OCI-LY7 (cell line): ENCODE measurements at regions of chr4 and their contacts with region 1.

Region 1: DNA sequence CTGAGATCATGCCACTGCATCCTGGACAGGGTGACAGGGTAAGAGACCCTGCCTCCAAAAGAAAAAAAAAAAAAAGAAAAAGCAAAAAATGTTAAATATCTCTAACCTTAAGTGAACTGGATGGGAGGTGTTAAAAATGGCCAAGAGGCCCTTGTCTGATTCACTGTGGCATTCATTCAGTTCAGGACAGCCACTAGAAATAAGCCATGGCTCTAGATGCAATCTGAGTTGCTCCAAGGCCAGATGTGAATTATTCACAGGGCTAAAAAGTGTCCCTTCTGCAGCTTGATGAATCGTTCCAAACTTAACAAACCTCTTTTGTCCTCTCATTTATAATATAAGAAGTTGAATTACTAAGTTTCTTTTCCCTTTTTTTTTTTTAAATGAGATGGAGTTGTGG is 63.7 kb upstream of the FBXW7 start:
- DNase-seq: no peak
- H3K4me3 ChIP-seq: no peak overlapping the region
- H3K27ac ChIP-seq: no peak overlapping the region
- H3K4me1 ChIP-seq: peaks cover 19% of the 10 kb centered on the region
- CTCF ChIP-seq: no peak

Region 2: GRCh38 chr4:152106113-152106763 is 493.4 kb before region 1 on chr4:
- CTCF ChIA-PET with region 1: no interaction called
- POLR2A ChIA-PET with region 1: no interaction called
- intact Hi-C with region 1: no loop called
- DNase-seq: no peak
- H3K4me3 ChIP-seq: no peak overlapping the region
- H3K27ac ChIP-seq: no peak overlapping the region
- H3K4me1 ChIP-seq: peaks cover under 1% of the 10 kb centered on the region
- CTCF ChIP-seq: no peak

Region 3: GRCh38 chr4:152563209-152563608 is 36.4 kb before region 1 on chr4:
- CTCF ChIA-PET with region 1: no interaction called
- POLR2A ChIA-PET with region 1: interaction called, 10 read pairs
- intact Hi-C with region 1: no loop called
- DNase-seq: no peak
- H3K4me3 ChIP-seq: no peak overlapping the region
- H3K27ac ChIP-seq: no peak overlapping the region
- H3K4me1 ChIP-seq: no peaks in the 10 kb centered on the region
- CTCF ChIP-seq: no peak

Region 4: GRCh38 chr4:153564630-153565525 is 965.2 kb after region 1 on chr4:
- CTCF ChIA-PET with region 1: no interaction called
- POLR2A ChIA-PET with region 1: no interaction called
- intact Hi-C with region 1: no loop called
- DNase-seq: no peak
- H3K4me3 ChIP-seq: no peak overlapping the region
- H3K27ac ChIP-seq: no peak overlapping the region
- H3K4me1 ChIP-seq: peaks cover 57% of the 10 kb centered on the region
- CTCF ChIP-seq: no peak